ENCODE measurements at regions of chr14 and their contacts with region 1.

Region 1: GRCh38 chr14:93939304-93940229 is 12.4 kb downstream of the FAM181A start:
- DNase-seq: peak; percentile 87
- H3K4me3 Mint-ChIP-seq: peak overlapping the region; percentile 62
- H3K27ac Mint-ChIP-seq: peak overlapping the region; percentile 77
- H3K4me1 Mint-ChIP-seq: peaks cover 31% of the 10 kb centered on the region
- H3K27me3 Mint-ChIP-seq: no peaks in the 10 kb centered on the region

Region 2: DNA sequence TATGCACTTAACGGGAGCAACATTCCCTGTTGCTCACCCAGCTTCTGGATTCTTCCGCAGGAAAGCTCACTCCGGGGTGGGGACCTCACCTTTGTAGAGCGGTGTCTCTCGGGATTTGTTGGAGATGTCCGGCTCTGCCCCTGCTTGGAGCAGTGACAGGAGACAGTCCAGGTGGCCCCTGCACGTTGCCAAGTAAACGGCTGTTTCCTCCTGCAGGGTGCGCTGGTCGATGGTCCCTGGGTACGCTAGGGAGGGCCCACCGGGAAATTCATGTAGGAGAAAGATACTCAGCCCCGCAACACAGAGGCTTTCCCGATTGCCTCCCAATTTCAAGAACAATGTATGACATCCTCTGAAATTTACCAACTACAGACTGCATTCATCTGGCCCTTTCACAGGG is 13.7 kb after region 1 on chr14:
- CTCF ChIA-PET with region 1: interaction called, 54 read pairs
- POLR2A ChIA-PET with region 1: no interaction called
- DNase-seq: no peak
- H3K4me3 Mint-ChIP-seq: no peak overlapping the region
- H3K27ac Mint-ChIP-seq: no peak overlapping the region
- H3K4me1 Mint-ChIP-seq: peaks cover 73% of the 10 kb centered on the region
- H3K27me3 Mint-ChIP-seq: no peaks in the 10 kb centered on the region

Region 3: GRCh38 chr14:93965287-93965851 is 25.8 kb after region 1 on chr14:
- CTCF ChIA-PET with region 1: interaction called, 81 read pairs
- POLR2A ChIA-PET with region 1: interaction called, 7 read pairs
- DNase-seq: no peak
- H3K4me3 Mint-ChIP-seq: no peak overlapping the region
- H3K27ac Mint-ChIP-seq: no peak overlapping the region
- H3K4me1 Mint-ChIP-seq: peaks cover 88% of the 10 kb centered on the region
- H3K27me3 Mint-ChIP-seq: no peaks in the 10 kb centered on the region

Region 4: GRCh38 chr14:93977790-93978581 is 38.4 kb after region 1 on chr14:
- CTCF ChIA-PET with region 1: interaction called, 81 read pairs
- POLR2A ChIA-PET with region 1: interaction called, 3 read pairs
- DNase-seq: peak; percentile 90
- H3K4me3 Mint-ChIP-seq: peak overlapping the region; percentile 42
- H3K27ac Mint-ChIP-seq: peak overlapping the region; percentile 95
- H3K4me1 Mint-ChIP-seq: peaks cover 76% of the 10 kb centered on the region
- H3K27me3 Mint-ChIP-seq: no peaks in the 10 kb centered on the region

Region 5: DNA sequence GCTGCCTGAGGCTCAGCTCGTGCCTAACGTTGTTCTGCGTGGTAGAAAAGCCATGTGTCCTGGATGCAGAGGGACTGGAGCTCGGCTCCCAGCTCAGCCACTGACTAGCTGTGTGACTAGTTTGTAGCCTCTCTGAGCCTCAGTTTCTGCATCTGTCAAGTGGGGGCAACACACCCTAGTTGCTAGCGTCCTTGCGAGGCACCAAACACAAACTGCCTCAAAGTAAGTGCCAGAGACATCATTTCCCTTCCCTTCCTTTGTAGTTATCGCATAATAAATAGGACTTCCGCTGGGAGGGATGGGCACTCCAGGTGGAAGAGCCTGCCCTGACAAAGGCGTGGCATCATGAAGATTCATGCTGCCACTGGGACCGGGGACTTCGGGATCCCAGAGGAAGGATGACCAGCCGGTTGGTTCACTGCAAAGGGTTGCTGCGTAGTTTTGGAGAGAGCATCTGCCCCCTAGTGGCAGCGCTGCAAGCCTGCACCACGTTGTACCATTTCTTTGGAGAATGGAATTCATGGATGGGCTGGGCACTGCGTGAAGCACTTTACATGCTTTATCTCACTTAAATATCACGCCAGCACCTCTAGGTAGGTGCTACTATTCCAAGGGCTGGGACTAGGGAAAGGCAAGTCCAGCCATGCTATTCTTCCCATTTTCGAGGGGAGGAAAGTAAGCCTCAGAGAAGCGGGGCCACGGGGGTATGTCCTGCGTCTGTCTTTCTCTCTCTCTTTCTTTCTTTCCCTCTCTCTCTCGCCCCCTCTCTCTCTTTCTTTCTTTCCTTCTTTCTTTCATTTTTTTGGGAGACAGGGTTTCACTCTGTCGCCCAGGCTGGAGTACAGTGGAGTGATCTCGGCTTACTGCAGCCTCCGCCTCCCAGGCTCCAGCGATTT is 62.2 kb after region 1 on chr14:
- CTCF ChIA-PET with region 1: interaction called, 112 read pairs
- POLR2A ChIA-PET with region 1: interaction called, 3 read pairs
- DNase-seq: peak; percentile 63
- H3K4me3 Mint-ChIP-seq: no peak overlapping the region
- H3K27ac Mint-ChIP-seq: no peak overlapping the region
- H3K4me1 Mint-ChIP-seq: peaks cover 42% of the 10 kb centered on the region
- H3K27me3 Mint-ChIP-seq: peaks cover 6% of the 10 kb centered on the region

Region 6: DNA sequence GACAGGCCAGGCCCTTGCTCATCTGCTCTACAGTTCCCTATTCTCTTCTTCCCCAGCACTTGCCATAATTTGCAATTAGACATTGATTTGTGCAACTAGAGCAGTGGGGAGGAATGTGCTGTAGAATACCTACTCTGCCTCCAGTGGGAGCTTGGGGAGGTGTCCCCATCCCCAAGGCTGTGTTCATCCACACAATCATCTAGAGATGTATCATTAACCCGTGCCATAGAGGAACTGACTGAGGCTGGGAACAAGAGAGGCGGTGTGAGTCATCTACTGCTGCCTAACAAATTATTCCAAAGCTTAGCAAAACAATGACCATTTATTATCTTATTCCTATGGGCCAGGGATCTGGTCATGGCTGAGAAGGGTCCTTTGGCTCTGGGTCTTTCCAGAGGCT is 81.4 kb after region 1 on chr14:
- CTCF ChIA-PET with region 1: interaction called, 20 read pairs
- POLR2A ChIA-PET with region 1: interaction called, 3 read pairs
- DNase-seq: no peak
- H3K4me3 Mint-ChIP-seq: no peak overlapping the region
- H3K27ac Mint-ChIP-seq: no peak overlapping the region
- H3K4me1 Mint-ChIP-seq: peaks cover 44% of the 10 kb centered on the region
- H3K27me3 Mint-ChIP-seq: peaks cover 16% of the 10 kb centered on the region

Region 7: GRCh38 chr14:94036313-94037050 is 96.9 kb after region 1 on chr14:
- CTCF ChIA-PET with region 1: interaction called, 10 read pairs
- POLR2A ChIA-PET with region 1: interaction called, 3 read pairs
- DNase-seq: peak; percentile 85
- H3K4me3 Mint-ChIP-seq: no peak overlapping the region
- H3K27ac Mint-ChIP-seq: no peak overlapping the region
- H3K4me1 Mint-ChIP-seq: peaks cover 7% of the 10 kb centered on the region
- H3K27me3 Mint-ChIP-seq: no peaks in the 10 kb centered on the region